ENCODE measurements at regions of chr2 and their contacts with region 1.

Region 1: DNA sequence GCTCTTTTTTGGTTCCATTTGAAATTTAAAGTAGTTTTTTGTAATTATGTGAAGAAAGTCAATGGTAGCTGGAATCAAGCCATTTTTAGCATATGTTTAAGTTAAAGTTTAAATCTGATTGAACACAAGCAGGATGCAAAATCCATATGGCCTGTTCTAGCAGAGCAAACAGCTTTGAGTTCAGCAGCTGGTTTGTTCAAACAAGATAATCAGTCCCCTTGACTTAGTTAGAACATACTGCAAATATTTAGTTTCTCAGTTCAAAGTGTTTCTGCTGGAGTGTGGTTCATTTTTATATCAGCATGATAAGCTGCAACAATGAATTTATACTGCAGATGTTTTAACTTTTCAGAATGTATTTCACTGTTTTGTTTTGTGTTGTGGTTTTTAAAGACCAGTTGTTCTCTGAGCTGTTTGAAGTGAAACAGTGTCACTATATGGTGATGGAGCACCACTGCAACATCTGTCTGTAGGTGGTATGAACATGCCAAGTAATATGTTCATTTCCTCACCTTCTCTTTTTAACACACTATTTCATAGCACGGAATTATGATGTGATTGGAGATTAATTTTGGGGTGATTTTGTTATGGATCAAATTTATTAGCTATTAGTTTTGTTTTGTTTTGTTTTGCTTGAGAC is 125.3 kb downstream of the COL4A4 start:
- DNase-seq: no peak
- H3K4me3 ChIP-seq: no peak overlapping the region
- H3K27ac ChIP-seq: no peak overlapping the region
- H3K4me1 ChIP-seq: no peaks in the 10 kb centered on the region
- H3K27me3 ChIP-seq: no peaks in the 10 kb centered on the region
- CTCF ChIP-seq: no peak

Region 2: GRCh38 chr2:226690461-226691024 is 348.1 kb before region 1 on chr2:
- intact Hi-C with region 1: no loop called
- DNase-seq: no peak
- H3K4me3 ChIP-seq: no peak overlapping the region
- H3K27ac ChIP-seq: peak overlapping the region; percentile 30 to 51
- H3K4me1 ChIP-seq: peaks cover 0 to 17% (median 8%) of the 10 kb centered on the region in 4 donors
- H3K27me3 ChIP-seq: no peaks in the 10 kb centered on the region
- CTCF ChIP-seq: no peak

Region 3: GRCh38 chr2:227308784-227309183 is 270.1 kb after region 1 on chr2:
- intact Hi-C with region 1: no loop called
- DNase-seq: no peak
- H3K4me3 ChIP-seq: no peak overlapping the region
- H3K27ac ChIP-seq: no peak overlapping the region
- H3K4me1 ChIP-seq: no peaks in the 10 kb centered on the region
- H3K27me3 ChIP-seq: no peaks in the 10 kb centered on the region
- CTCF ChIP-seq: no peak

Region 4: GRCh38 chr2:227713159-227713690 is 674.6 kb after region 1 on chr2:
- intact Hi-C with region 1: loop called (anchors 5 kb)
- DNase-seq: no peak
- H3K4me3 ChIP-seq: no peak overlapping the region
- H3K27ac ChIP-seq: no peak overlapping the region
- H3K4me1 ChIP-seq: peaks cover 0 to 25% (median 3%) of the 10 kb centered on the region in 4 donors
- H3K27me3 ChIP-seq: no peaks in the 10 kb centered on the region
- CTCF ChIP-seq: no peak

Measured in tibial artery (tissue), 4 donors.